HEK293 (cell line): ENCODE measurements at regions of chr9 and their contacts with region 1.

Region 1: GRCh38 chr9:37485389-37486219 is at the start of gene POLR1E:
- H3K4me3 ChIP-seq: peak within 1 kb of the TSS; percentile 65
- H3K27ac ChIP-seq: peak within 1 kb of the TSS; percentile 50; the same call in 1 of the 2 replicates
- H3K4me1 ChIP-seq: no peaks in the 10 kb centered on the region
- CTCF ChIP-seq: no peak; the same call in 1 of the 2 replicates

Region 2: DNA sequence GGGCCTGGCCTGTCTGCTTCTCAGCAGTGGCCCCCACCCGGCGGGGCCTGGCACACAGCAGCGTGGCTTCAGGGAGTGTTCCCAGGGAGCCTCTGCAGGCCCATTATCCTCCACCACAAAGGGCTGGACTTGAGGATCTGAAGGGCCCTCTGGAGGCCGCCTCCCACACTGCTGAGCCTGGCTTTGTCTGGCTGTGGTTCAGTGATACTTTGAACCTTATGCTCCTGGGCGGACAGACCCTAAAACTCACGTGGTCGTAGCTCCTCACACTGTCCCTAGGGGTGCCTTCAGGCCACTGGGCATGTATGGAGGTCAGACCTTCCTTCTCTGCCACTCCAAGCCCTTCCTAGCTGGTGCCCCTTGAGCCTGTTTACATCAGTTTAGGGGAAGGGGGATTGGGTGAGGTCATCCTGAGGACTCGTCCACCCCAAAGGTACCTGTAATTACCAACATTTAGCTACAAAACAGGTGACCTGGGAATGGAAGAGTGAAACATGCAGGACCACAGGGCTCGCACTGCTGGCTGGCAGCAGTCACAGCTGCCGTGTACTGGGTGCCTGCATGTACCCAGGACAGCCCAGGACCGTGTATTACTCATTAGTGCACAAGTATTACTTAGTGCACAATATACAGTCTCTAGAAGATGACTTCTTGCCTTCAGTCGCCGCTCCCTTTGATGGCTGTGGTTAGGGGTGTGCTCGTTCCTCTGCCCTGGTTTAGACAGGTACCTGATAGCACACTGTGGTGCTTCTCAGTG is 54.6 kb before region 1 on chr9:
- CTCF ChIA-PET with region 1: no interaction called
- POLR2A ChIA-PET with region 1: no interaction called
- H3K4me3 ChIP-seq: no peak overlapping the region
- H3K27ac ChIP-seq: no peak overlapping the region
- H3K4me1 ChIP-seq: no peaks in the 10 kb centered on the region
- CTCF ChIP-seq: no peak

Region 3: DNA sequence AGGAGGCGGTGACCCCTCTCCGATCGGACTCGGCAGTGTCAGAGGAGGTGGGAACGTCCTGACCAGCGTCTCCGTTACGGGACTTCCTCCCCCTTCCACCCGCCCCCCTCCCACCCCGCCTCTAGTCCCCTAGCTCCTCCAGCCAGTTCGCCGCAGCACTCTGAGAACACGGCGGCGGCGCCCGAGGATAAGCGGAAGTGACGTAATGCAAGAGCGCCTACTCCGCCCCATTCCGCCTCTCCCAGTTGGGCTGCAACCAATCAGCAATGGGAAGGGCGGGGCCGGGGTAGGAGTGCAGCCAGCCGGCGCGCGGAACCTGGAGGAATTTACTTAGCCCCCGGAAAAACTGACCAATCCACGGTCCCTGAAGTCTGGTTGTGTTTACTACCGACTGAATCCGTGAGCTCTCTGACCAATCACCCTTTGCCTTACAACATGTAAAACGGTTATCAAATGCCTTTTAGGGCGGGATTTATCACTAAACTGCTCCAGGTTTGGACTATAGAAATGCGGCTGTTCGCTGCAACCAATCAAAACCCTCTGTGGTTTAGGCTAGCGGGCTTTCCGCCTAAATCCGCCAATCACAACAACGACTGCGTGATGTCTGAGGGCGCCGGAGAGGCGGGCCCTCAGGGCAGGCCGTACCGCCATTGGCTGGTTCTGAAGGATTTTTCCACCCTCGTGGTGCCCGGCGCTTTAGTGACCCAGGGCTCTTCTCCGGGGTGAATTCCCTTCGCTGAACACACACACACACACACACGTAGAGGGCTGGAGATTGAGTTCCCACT is 20.2 kb before region 1 on chr9 and contains the start of gene ZBTB5:
- CTCF ChIA-PET with region 1: interaction called, 8 read pairs
- POLR2A ChIA-PET with region 1: interaction called, 39 read pairs
- H3K4me3 ChIP-seq: peak within 1 kb of the TSS; percentile 95
- H3K27ac ChIP-seq: peak within 1 kb of the TSS; percentile 86
- H3K4me1 ChIP-seq: no peaks in the 10 kb centered on the region
- CTCF ChIP-seq: no peak

Region 4: DNA sequence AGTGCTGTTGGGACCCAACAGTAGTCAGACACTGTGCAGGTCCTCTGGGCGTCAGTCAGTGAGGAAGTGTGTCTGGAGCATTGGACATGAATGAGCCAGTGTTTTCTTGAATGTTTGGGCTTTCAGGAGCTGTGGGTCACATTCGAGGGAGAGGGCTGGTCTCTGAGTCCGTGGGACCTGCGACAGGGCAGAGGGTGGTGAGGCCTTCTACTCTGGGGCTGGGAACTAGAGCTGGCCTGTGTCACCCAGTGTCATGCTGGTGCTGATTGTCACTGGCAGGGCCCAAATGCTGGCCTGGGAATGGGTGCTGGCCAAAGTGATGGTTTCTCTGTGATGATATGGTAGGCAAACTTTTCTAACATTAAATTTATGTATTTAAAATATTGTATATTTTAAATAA is 10.4 kb after region 1 on chr9:
- CTCF ChIA-PET with region 1: interaction called, 7 read pairs
- POLR2A ChIA-PET with region 1: interaction called, 14 read pairs
- H3K4me3 ChIP-seq: no peak overlapping the region
- H3K27ac ChIP-seq: no peak overlapping the region
- H3K4me1 ChIP-seq: no peaks in the 10 kb centered on the region
- CTCF ChIP-seq: no peak

Region 5: GRCh38 chr9:37503736-37504135 is 18.1 kb after region 1 on chr9:
- CTCF ChIA-PET with region 1: interaction called, 3 read pairs
- POLR2A ChIA-PET with region 1: interaction called, 12 read pairs
- H3K4me3 ChIP-seq: no peak overlapping the region
- H3K27ac ChIP-seq: no peak overlapping the region
- H3K4me1 ChIP-seq: no peaks in the 10 kb centered on the region
- CTCF ChIP-seq: no peak

Region 6: GRCh38 chr9:37575921-37576721 is 90.5 kb after region 1 on chr9 and contains the start of gene FBXO10:
- CTCF ChIA-PET with region 1: interaction called, 4 read pairs
- POLR2A ChIA-PET with region 1: interaction called, 21 read pairs
- H3K4me3 ChIP-seq: peak within 1 kb of the TSS; percentile 80
- H3K27ac ChIP-seq: peak within 1 kb of the TSS; percentile 46; the same call in 1 of the 2 replicates
- H3K4me1 ChIP-seq: peaks cover 5% of the 10 kb centered on the region; the same call in 1 of the 2 replicates
- CTCF ChIP-seq: no peak

Region 7: GRCh38 chr9:37592108-37592951 is 106.7 kb after region 1 on chr9 and contains the start of gene TOMM5:
- CTCF ChIA-PET with region 1: interaction called, 3 read pairs
- POLR2A ChIA-PET with region 1: interaction called, 16 read pairs
- H3K4me3 ChIP-seq: peak within 1 kb of the TSS; percentile 83
- H3K27ac ChIP-seq: peak within 1 kb of the TSS; percentile 80
- H3K4me1 ChIP-seq: no peaks in the 10 kb centered on the region
- CTCF ChIP-seq: no peak

Region 8: GRCh38 chr9:37639109-37639762 is 153.6 kb after region 1 on chr9:
- CTCF ChIA-PET with region 1: no interaction called
- POLR2A ChIA-PET with region 1: no interaction called
- H3K4me3 ChIP-seq: no peak overlapping the region
- H3K27ac ChIP-seq: no peak overlapping the region
- H3K4me1 ChIP-seq: no peaks in the 10 kb centered on the region
- CTCF ChIP-seq: no peak